CD8-positive, alpha-beta T cell (primary cell): ENCODE measurements at regions of chr3 and their contacts with region 1.

Region 1: GRCh38 chr3:115783938-115784738 is 160.8 kb downstream of the GAP43 start:
- DNase-seq: peak; percentile 85 to 96 (median 92)
- ATAC-seq: peak; percentile 79
- H3K4me3 ChIP-seq: peak overlapping the region; percentile 67 to 72
- H3K4me3 Mint-ChIP-seq: peak overlapping the region; percentile 79
- H3K27ac ChIP-seq: peak overlapping the region; percentile 95
- H3K27ac Mint-ChIP-seq: peak overlapping the region; percentile 97
- H3K4me1 ChIP-seq: peaks cover 8% of the 10 kb centered on the region
- H3K4me1 Mint-ChIP-seq: peaks cover 15% of the 10 kb centered on the region
- H3K27me3 ChIP-seq: peaks cover 0 to 2% of the 10 kb centered on the region in 2 experiments
- H3K27me3 Mint-ChIP-seq: no peaks in the 10 kb centered on the region
- CTCF ChIP-seq: peak; percentile 98

Region 2: DNA sequence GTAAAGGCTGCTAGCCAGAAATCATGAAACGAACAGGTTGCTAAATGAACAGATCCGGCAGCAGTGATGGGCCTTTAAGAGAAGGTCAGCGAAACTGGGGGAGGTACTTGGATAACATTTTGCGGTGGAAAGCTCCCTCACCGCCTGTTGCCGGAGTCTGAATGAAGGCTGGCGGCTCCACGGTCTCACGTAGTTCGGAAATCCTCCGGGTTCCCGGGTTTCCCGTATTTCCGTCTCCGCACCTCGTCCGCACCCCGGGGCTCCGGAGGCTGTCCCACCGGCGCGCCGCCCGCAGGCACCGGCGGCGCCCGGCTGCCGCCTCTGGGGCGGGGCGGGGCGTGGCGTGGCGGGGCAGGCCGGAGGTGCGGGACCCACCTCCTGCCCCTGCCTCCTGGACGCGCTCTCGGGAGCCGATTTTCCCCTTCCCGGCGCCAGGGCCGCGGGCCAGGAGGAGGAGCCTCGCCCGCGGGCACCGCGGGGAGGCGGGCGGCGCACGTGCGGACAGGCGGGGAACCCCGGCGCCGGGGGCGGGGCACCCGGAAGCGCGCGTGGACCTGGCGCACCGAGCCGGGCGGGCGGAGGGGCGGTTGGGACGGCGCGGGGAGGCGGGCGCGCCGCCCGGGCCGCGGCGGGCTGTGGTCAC is 1836.6 kb before region 1 on chr3 and contains the start of gene ZDHHC23:
- CTCF ChIA-PET with region 1: no interaction called
- POLR2A ChIA-PET with region 1: no interaction called
- intact Hi-C with region 1: loop called (anchors 5 to 10 kb)
- DNase-seq: peak; percentile 21 to 88 (median 63)
- ATAC-seq: peak; percentile 87
- H3K4me3 ChIP-seq: peak within 1 kb of the TSS; percentile 74 to 85
- H3K4me3 Mint-ChIP-seq: peak within 1 kb of the TSS; percentile 86
- H3K27ac ChIP-seq: no peak within 1 kb of the TSS
- H3K27ac Mint-ChIP-seq: peak within 1 kb of the TSS; percentile 84
- H3K4me1 ChIP-seq: peaks cover 8% of the 10 kb centered on the region
- H3K4me1 Mint-ChIP-seq: peaks cover 10% of the 10 kb centered on the region
- H3K27me3 ChIP-seq: no peaks in the 10 kb centered on the region
- H3K27me3 Mint-ChIP-seq: peaks cover 21% of the 10 kb centered on the region
- CTCF ChIP-seq: no peak
- total RNA-seq, gene ZDHHC23: 2.1 to 4.7 TPM

Region 3: DNA sequence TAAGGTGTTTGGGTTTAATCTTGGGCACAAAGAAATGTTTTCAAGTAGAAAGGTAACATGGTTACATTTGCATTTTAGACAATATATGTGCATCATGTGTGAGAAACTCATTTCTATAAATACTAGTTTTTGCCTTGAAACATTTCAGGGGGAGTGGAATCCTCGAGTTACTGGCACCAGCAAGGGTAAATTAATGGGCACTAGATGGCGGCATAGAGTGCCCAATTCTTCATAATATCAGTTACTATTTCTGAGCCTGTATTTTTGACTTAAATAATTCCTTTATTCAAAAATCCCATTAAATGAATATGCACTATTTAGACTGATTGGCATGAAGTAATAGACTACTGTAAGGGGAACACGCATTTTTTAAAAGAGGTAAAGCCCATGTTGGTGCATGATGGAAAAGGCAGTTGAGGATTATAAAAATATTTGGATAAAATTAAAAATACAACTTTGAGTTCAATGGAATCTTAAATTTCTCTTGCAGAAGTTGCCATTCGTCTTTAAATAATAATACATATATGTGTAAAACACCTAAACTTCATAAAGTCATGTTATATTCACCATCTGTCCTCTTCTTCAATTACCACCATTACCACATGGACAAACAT is 743.4 kb before region 1 on chr3:
- CTCF ChIA-PET with region 1: no interaction called
- POLR2A ChIA-PET with region 1: no interaction called
- intact Hi-C with region 1: loop called in 1 of 2 experiments (anchors 2 kb)
- DNase-seq: peak in 8 of 9 experiments; percentile 1 to 62 (median 33)
- ATAC-seq: peak; percentile 69
- H3K4me3 ChIP-seq: no peak overlapping the region
- H3K4me3 Mint-ChIP-seq: no peak overlapping the region
- H3K27ac ChIP-seq: no peak overlapping the region
- H3K27ac Mint-ChIP-seq: no peak overlapping the region
- H3K4me1 ChIP-seq: no peaks in the 10 kb centered on the region
- H3K4me1 Mint-ChIP-seq: peaks cover 12% of the 10 kb centered on the region
- H3K27me3 ChIP-seq: no peaks in the 10 kb centered on the region
- H3K27me3 Mint-ChIP-seq: no peaks in the 10 kb centered on the region
- CTCF ChIP-seq: peak; percentile 70

Region 4: GRCh38 chr3:115169808-115170207 is 614.3 kb before region 1 on chr3:
- CTCF ChIA-PET with region 1: no interaction called
- POLR2A ChIA-PET with region 1: no interaction called
- intact Hi-C with region 1: loop called in 1 of 2 experiments (anchors 5 kb)
- DNase-seq: peak in 1 of 9 experiments; percentile 32
- ATAC-seq: no peak
- H3K4me3 ChIP-seq: no peak overlapping the region
- H3K4me3 Mint-ChIP-seq: no peak overlapping the region
- H3K27ac ChIP-seq: no peak overlapping the region
- H3K27ac Mint-ChIP-seq: no peak overlapping the region
- H3K4me1 ChIP-seq: peaks cover 11% of the 10 kb centered on the region
- H3K4me1 Mint-ChIP-seq: peaks cover 12% of the 10 kb centered on the region
- H3K27me3 ChIP-seq: no peaks in the 10 kb centered on the region
- H3K27me3 Mint-ChIP-seq: no peaks in the 10 kb centered on the region
- CTCF ChIP-seq: peak; percentile 59

Region 5: GRCh38 chr3:115692887-115693524 is 91.1 kb before region 1 on chr3:
- CTCF ChIA-PET with region 1: interaction called, 8 read pairs
- POLR2A ChIA-PET with region 1: no interaction called
- intact Hi-C with region 1: loop called (anchors 1 to 2 kb)
- DNase-seq: peak; percentile 37 to 77 (median 67)
- ATAC-seq: peak; percentile 88
- H3K4me3 ChIP-seq: no peak overlapping the region
- H3K4me3 Mint-ChIP-seq: no peak overlapping the region
- H3K27ac ChIP-seq: no peak overlapping the region
- H3K27ac Mint-ChIP-seq: no peak overlapping the region
- H3K4me1 ChIP-seq: no peaks in the 10 kb centered on the region
- H3K4me1 Mint-ChIP-seq: peaks cover 3% of the 10 kb centered on the region
- H3K27me3 ChIP-seq: no peaks in the 10 kb centered on the region
- H3K27me3 Mint-ChIP-seq: peaks cover 3% of the 10 kb centered on the region
- CTCF ChIP-seq: peak; percentile 69

Region 6: GRCh38 chr3:115819785-115820384 is 35.7 kb after region 1 on chr3:
- CTCF ChIA-PET with region 1: interaction called, 13 read pairs
- POLR2A ChIA-PET with region 1: no interaction called
- intact Hi-C with region 1: loop called (anchors 1 to 2 kb)
- DNase-seq: peak; percentile 26 to 88 (median 56)
- ATAC-seq: peak; percentile 91
- H3K4me3 ChIP-seq: no peak overlapping the region
- H3K4me3 Mint-ChIP-seq: no peak overlapping the region
- H3K27ac ChIP-seq: no peak overlapping the region
- H3K27ac Mint-ChIP-seq: no peak overlapping the region
- H3K4me1 ChIP-seq: no peaks in the 10 kb centered on the region
- H3K4me1 Mint-ChIP-seq: no peaks in the 10 kb centered on the region
- H3K27me3 ChIP-seq: peaks cover 0 to 3% of the 10 kb centered on the region in 2 experiments
- H3K27me3 Mint-ChIP-seq: no peaks in the 10 kb centered on the region
- CTCF ChIP-seq: peak; percentile 100

Region 7: GRCh38 chr3:115855911-115856310 is 71.8 kb after region 1 on chr3:
- CTCF ChIA-PET with region 1: no interaction called
- POLR2A ChIA-PET with region 1: no interaction called
- intact Hi-C with region 1: no loop called
- DNase-seq: no peak
- ATAC-seq: no peak
- H3K4me3 ChIP-seq: no peak overlapping the region
- H3K4me3 Mint-ChIP-seq: no peak overlapping the region
- H3K27ac ChIP-seq: no peak overlapping the region
- H3K27ac Mint-ChIP-seq: no peak overlapping the region
- H3K4me1 ChIP-seq: no peaks in the 10 kb centered on the region
- H3K4me1 Mint-ChIP-seq: no peaks in the 10 kb centered on the region
- H3K27me3 ChIP-seq: no peaks in the 10 kb centered on the region
- H3K27me3 Mint-ChIP-seq: peaks cover 28% of the 10 kb centered on the region
- CTCF ChIP-seq: no peak